Motor neuron (in vitro differentiated cells): ENCODE measurements at regions of chr11 and their contacts with region 1.

Region 1: DNA sequence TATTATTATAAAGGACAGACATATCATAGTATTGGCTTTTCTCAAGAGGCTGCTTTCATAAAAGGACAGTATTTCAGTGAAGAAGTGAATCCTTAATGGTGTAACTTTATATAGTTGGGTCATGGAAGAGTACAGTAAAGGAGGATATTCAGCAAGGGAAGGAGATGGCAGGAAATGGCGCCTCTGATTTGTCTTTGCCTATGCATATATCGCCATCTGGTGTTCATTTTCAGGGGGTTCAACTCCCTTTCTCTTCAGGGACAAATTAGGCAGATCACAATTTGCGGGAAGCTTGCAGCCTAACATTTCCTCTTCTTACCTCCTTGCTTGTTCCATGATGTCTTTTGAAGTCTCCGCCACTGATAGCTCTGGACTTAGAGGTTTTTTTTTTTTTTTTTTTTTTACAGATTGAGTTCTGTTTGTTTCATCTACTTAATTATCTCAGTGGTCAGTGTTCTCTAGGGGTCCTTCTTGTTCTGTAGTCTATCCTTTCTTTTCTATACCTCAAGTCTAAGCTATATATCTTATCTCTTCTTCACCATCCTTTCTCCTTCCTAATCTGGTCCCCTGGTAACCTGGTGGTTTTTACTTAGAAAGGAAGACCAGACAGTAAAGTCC is 21.8 kb upstream of the RRM1 start:
- ATAC-seq: peak in 7 of 8 experiments; percentile 61 to 95 (median 90)
- H3K4me3 ChIP-seq: no peak overlapping the region
- H3K27ac ChIP-seq: no peak overlapping the region
- H3K4me1 ChIP-seq: no peaks in the 10 kb centered on the region

Region 2: GRCh38 chr11:3841426-3842350 is 231.1 kb before region 1 on chr11:
- in situ Hi-C with region 1: loop called in 4 of 9 experiments (anchors 5 to 25 kb)
- ATAC-seq: peak; percentile 50 to 74 (median 71)
- H3K4me3 ChIP-seq: peak overlapping the region; percentile 58 to 95 (median 92)
- H3K27ac ChIP-seq: peak overlapping the region; percentile 38 to 86
- H3K4me1 ChIP-seq: peaks cover 8 to 22% of the 10 kb centered on the region in 2 donors

Region 3: DNA sequence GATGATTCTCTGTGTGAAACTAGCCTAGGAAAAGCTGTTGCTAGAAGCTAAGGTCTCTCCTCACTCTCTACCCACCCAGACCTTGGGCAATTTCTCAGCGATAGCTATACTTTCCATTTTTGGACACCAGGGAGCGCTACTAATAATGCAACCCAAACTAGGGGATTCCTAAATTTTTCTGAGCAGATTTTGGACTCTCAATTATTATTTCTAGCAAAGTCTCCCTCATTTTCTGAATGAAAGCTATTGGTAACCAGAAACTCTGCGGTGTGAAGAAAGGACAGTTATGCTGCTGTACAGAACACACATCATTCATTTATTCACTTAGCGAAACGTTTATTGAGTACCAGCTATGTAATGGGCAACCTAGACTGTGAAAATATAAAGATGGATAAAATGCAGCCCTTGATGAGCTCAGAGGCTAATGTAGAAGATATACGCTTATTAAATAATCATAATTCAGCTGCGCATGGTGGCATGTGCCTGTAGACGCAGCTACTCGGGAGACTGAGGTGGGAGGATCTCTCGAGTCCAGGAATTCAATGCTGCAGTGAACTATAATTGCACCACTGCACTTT is 223.4 kb before region 1 on chr11:
- in situ Hi-C with region 1: loop called in 8 of 9 experiments (anchors 5 to 25 kb)
- ATAC-seq: peak in 5 of 8 experiments; percentile 30 to 83 (median 64)
- H3K4me3 ChIP-seq: no peak overlapping the region
- H3K27ac ChIP-seq: no peak overlapping the region
- H3K4me1 ChIP-seq: peaks cover 1 to 2% of the 10 kb centered on the region in 2 donors

Region 4: DNA sequence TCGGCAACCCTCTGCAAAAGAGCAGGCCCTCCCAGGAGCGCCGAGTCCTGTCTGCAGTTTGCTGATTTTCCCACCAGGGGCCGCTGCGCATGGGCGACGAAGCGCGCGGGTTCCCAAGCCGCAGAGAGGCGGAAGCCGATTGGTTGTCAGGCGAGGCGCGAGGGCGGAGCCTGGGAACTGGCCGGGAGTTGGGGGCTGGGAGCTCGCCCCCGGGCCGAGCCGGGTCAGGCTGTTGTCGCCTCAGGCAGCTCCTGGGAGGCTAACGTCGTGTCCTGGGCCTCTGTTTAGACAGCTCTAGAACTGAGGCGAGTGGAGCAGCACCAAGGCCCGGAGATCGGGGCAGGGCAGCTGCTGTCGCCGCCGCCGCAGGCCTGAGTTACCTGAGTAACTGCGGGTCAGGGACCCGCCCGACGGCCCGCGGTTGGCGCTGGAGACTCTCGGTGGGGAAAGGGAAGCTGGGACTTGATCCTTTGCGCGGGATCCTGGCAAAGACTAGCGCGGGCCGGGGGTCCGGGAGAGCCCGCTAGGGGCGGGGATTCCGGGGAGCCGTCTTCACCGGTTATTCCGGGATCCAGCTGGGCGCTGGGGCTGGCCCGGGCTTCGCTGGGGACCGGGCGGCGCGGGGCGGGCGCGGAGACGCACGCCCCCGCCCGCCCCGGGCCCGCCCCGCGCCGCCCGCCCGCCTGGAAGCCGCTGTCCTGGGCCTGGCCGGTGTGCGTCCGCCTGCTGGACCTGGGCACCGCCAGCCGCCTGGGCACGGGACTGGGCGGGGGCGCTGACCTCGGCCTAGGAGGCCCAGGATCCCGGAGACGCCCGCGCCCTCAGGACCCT is 217.6 kb before region 1 on chr11 and contains the start of gene STIM1:
- in situ Hi-C with region 1: loop called in 4 of 9 experiments (anchors 10 to 25 kb)
- ATAC-seq: peak; percentile 82 to 94 (median 92)
- H3K4me3 ChIP-seq: peak within 1 kb of the TSS; percentile 58 to 98 (median 65)
- H3K27ac ChIP-seq: peak within 1 kb of the TSS; percentile 34 to 76
- H3K4me1 ChIP-seq: peaks cover 27 to 37% of the 10 kb centered on the region in 2 donors
- total RNA-seq, gene STIM1: 6.2 to 47.3 (median 10.2) TPM